Activated naive CD4-positive, alpha-beta T cell treated with anti-CD3 and anti-CD28 coated beads for 36 hours (primary cell): ENCODE measurements at regions of chr22 and their contacts with region 1.

Region 1: GRCh38 chr22:49838771-49839717 is 11.4 kb upstream of the BRD1 start:
- DNase-seq: peak; percentile 90
- H3K4me3 Mint-ChIP-seq: peak overlapping the region; percentile 67
- H3K27ac Mint-ChIP-seq: peak overlapping the region; percentile 85
- H3K4me1 Mint-ChIP-seq: peaks cover 31% of the 10 kb centered on the region
- H3K27me3 Mint-ChIP-seq: no peaks in the 10 kb centered on the region

Region 2: DNA sequence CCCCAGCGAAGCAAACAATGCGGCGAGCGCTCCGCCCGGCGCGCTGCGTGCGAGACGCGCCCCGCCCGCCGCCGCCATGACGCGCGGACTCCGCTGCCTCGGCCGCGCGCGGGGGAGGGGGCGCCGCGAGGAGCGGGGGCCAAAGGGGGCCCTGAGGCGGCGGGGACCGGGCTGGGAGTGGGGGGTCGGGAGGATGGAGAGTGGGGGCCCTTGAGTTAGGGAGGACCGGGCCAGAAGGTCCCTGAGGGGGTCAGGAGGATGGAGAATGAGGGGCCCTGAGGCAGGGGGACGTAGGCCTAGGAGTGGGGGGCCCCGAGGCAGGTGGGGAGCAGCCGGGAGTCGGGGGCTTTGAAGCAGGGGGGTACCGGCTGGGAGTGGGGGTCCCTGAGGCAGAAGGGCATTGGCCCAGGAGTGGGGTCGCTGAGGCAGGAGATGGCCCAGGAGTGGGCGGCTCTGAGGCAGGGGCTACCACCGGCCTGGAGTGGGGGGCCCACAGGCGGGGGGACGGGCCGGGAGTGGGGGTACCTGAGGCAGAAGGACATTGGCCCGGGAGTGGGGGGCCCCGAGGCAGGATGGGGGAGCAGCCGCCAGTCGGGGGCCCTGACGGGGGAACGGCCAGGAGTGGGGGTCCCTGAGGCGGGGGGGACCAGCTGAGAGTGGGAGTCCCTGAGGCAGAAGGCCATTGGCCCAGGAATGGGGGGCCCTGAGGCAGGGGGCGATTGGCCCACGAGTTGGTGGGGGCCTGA is 11.0 kb before region 1 on chr22 and contains the start of gene BRD1:
- CTCF ChIA-PET with region 1: no interaction called
- intact Hi-C with region 1: loop called (anchors 1 kb)
- DNase-seq: peak; percentile 35
- H3K4me3 Mint-ChIP-seq: peak within 1 kb of the TSS; percentile 85
- H3K27ac Mint-ChIP-seq: peak within 1 kb of the TSS; percentile 91
- H3K4me1 Mint-ChIP-seq: peaks cover 53% of the 10 kb centered on the region
- H3K27me3 Mint-ChIP-seq: no peaks in the 10 kb centered on the region
- total RNA-seq, gene BRD1: 26.0 to 27.0 TPM

Region 3: GRCh38 chr22:49917974-49918910 is 79.2 kb after region 1 on chr22 and contains the starts of genes ALG12 and CRELD2:
- CTCF ChIA-PET with region 1: no interaction called
- intact Hi-C with region 1: loop called (anchors 5 kb)
- DNase-seq: peak; percentile 98
- H3K4me3 Mint-ChIP-seq: peak within 1 kb of the TSS; percentile 83
- H3K27ac Mint-ChIP-seq: peak within 1 kb of the TSS; percentile 80
- H3K4me1 Mint-ChIP-seq: peaks cover 23% of the 10 kb centered on the region
- H3K27me3 Mint-ChIP-seq: no peaks in the 10 kb centered on the region
- total RNA-seq, gene ALG12: 7.4 to 9.6 TPM
- total RNA-seq, gene CRELD2: 15.3 to 16.2 TPM